MCF 10A (cell line): ENCODE measurements at regions of chr16 and their contacts with region 1.

Region 1: DNA sequence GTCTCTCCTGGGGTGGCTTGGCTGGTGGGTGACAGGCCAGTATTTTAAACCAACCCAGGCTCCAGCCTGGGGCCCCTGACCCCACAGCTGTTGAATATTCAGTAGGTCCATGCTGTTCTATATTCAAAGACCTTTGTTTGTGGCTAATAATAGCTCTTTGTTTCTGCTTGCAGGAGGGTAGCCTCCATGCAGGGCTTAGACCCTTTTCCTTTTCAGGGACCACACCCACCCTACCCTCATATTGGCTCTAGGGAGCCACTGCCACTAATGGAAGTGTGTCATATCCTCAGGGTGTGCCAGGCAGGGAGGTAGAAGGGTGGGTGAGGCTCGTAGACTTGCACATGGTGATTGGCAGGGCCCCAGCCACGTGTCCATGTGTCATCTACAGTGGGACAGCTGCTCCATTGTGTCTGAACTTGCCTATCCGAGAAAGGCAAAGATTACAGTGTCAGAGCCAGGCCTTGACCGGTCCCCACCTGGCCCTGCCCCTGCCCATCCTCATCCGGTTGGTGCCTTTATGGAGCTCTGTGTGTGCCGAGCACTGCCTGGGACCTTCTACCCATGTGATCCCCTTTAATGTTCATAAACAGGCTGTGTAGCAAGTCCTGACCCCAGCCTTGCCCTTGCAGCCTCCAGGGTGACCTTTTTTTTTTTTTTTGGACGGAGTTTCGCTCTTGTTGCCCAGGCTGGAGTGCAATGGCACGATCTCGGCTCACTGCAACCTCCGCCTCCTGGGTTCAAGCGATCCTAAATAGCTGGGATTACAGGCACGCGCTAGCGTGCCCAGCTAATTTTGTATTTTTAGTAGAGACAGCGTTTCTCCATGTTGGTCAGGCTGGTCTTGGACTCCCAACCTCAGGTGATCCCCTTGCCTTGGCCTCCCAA is 22.1 kb downstream of the TMC7 start:
- DNase-seq: peak; percentile 96
- H3K4me3 Mint-ChIP-seq: peak overlapping the region; percentile 8
- H3K27ac Mint-ChIP-seq: peak overlapping the region; percentile 82
- H3K4me1 Mint-ChIP-seq: peaks cover 34% of the 10 kb centered on the region
- H3K27me3 Mint-ChIP-seq: no peaks in the 10 kb centered on the region
- CTCF ChIP-seq: no peak

Region 2: GRCh38 chr16:18932243-18932981 is 73.4 kb before region 1 on chr16:
- CTCF ChIA-PET with region 1: no interaction called
- POLR2A ChIA-PET with region 1: interaction called, 5 read pairs
- intact Hi-C with region 1: loop called (anchors 2 kb)
- DNase-seq: peak; percentile 39
- H3K4me3 Mint-ChIP-seq: no peak overlapping the region
- H3K27ac Mint-ChIP-seq: peak overlapping the region; percentile 49
- H3K4me1 Mint-ChIP-seq: peaks cover 10% of the 10 kb centered on the region
- H3K27me3 Mint-ChIP-seq: no peaks in the 10 kb centered on the region
- CTCF ChIP-seq: no peak

Region 3: DNA sequence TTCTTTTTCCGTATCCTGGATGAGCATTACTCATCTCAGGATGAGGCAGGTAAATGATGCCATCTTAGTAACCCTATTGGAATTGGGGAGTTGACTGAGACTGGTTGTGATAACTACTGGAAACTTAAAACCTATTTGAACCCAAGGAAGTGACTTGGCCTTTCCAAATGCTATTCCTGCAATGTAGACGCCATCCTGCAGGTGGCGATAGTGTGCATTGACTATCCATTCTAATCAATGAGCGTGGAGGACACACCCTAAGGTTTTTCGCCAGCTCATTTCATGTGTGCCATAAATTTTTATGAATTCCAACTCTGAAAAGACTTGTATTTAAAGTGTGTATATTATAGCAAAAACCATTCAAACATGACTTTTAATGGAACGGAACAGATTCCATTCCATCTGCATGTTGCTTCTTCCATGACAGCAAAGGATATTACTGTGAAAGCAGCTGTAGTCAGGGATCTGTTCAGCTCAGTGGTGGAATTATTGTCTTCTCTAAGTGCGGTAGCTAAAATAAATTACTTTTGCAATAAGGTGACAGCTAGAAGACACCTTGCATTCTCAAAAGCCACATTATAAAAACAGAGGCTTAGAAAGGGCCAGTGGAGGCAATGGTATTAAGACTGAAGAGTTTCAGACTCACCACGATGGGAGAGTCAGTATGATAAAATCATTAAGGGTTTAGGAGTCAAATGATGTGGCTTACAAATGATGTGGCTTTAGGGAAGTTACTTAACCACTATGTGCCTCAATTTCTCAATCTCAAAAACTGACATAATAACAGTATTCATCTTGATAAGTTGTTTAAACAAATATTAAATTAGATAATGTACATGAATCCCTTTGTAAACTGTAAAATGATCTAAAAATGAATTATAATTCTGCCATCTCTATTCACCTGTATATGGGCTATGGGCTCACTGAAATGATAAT is 217.7 kb after region 1 on chr16:
- CTCF ChIA-PET with region 1: no interaction called
- POLR2A ChIA-PET with region 1: no interaction called
- intact Hi-C with region 1: no loop called
- DNase-seq: peak; percentile 61
- H3K4me3 Mint-ChIP-seq: no peak overlapping the region
- H3K27ac Mint-ChIP-seq: no peak overlapping the region
- H3K4me1 Mint-ChIP-seq: peaks cover 11% of the 10 kb centered on the region
- H3K27me3 Mint-ChIP-seq: peaks cover 3% of the 10 kb centered on the region
- CTCF ChIP-seq: peak; percentile 58